ENCODE measurements at regions of chr12 and their contacts with region 1.

Region 1: DNA sequence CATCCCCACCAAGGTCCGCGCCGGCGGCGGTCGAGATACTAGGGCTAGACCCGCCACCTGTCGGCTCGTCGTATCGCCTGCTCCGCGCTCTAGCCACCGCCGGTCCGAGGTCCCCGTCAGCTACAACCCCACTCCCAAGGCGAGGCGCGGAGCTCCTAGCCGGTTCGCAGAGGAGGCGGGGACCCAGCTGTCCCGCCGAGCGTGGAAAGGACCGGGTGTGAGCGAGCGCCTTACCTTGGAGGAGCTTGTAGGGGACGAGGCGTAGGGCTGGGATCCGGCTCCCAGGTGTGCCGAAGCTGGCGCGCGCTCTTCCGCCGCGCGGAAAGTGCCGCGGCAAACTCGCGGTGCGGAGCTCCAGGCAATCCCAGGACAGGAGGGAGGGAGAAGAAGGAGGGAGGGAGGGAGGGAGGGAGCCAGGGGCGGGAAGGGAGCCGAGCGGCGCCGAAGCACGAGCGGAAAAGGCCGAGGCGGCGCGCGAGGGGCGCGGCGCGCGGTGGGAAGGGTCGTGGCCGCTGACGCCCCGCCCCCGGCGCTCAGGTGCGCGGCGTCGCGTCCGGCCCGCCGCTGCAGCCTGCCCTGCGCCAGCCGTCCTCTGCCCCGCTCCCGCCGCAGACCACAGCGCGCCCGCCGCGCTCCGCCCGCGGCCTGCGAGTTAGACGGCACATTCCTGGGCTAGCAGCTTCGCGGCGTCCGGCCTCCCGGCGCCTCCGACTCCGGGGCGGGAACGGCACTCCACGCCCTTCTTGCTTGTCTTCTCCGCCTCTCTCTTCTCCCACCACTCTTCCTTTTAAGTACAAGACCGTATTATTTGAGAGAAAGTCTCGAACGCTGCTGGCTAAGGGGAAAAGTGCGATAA is at the start of gene PAWR:
- DNase-seq: peak; percentile 86
- H3K4me3 Mint-ChIP-seq: peak within 1 kb of the TSS; percentile 87
- H3K27ac Mint-ChIP-seq: peak within 1 kb of the TSS; percentile 96
- H3K4me1 Mint-ChIP-seq: peaks cover 32% of the 10 kb centered on the region
- H3K27me3 Mint-ChIP-seq: no peaks in the 10 kb centered on the region
- CTCF ChIP-seq: peak; percentile 17
- total RNA-seq, gene PAWR: 248 and 330 TPM in 2 replicates

Region 2: DNA sequence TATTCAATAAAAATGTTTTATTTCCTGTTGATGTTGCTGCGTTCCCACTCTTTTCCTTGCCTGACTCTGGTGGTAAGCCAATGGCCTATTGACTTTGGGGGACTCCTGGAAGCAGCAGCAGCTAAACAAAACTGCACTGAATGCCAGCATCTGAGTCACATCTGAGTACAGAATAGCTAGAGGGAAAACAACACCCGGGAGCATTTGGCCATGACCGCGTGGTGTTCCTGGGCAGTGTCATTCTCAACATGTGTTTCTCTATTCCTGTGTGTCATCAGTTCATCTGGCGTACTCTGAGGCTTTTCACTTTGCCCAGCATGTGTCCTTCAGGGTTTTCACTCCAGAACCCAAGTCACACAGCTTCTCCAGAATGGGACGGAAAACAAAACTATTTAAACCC is 238.9 kb before region 1 on chr12:
- CTCF ChIA-PET with region 1: interaction called, 3 read pairs
- POLR2A ChIA-PET with region 1: interaction called, 20 read pairs
- intact Hi-C with region 1: no loop called
- DNase-seq: peak; percentile 94
- H3K4me3 Mint-ChIP-seq: peak overlapping the region; percentile 60
- H3K27ac Mint-ChIP-seq: peak overlapping the region; percentile 94
- H3K4me1 Mint-ChIP-seq: peaks cover 38% of the 10 kb centered on the region
- H3K27me3 Mint-ChIP-seq: no peaks in the 10 kb centered on the region
- CTCF ChIP-seq: no peak

Region 3: GRCh38 chr12:79601909-79602308 is 89.0 kb before region 1 on chr12:
- CTCF ChIA-PET with region 1: interaction called, 3 read pairs
- POLR2A ChIA-PET with region 1: interaction called, 11 read pairs
- intact Hi-C with region 1: no loop called
- DNase-seq: peak; percentile 13
- H3K4me3 Mint-ChIP-seq: no peak overlapping the region
- H3K27ac Mint-ChIP-seq: no peak overlapping the region
- H3K4me1 Mint-ChIP-seq: peaks cover 22% of the 10 kb centered on the region
- H3K27me3 Mint-ChIP-seq: no peaks in the 10 kb centered on the region
- CTCF ChIP-seq: no peak

Region 4: DNA sequence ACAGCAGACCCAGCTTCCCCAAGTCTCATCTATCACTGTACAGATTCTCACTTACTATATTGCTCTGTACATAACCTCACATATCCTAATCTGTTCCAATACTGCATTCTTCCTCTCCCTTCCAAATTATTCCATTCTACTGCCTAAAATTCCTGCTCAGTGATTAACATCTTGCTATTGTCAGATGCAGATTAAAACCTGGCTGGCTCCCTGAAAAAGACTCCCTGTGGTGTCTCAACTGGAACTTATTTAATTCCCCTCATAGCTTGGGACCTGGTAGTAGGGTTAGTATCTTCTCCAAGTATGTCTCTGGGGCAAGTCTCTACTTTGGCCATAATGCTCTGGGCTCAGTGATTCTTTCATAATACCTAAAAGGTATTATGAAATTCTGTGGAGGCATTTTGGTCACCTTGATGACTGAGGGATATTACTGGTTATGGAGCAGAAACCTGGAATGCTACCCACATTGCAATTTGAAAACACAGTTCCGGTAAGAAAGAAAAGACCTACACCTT is 55.9 kb before region 1 on chr12:
- CTCF ChIA-PET with region 1: interaction called, 7 read pairs
- POLR2A ChIA-PET with region 1: interaction called, 67 read pairs
- intact Hi-C with region 1: loop called (anchors 5 kb)
- DNase-seq: peak; percentile 73
- H3K4me3 Mint-ChIP-seq: peak overlapping the region; percentile 52
- H3K27ac Mint-ChIP-seq: peak overlapping the region; percentile 75
- H3K4me1 Mint-ChIP-seq: peaks cover 28% of the 10 kb centered on the region
- H3K27me3 Mint-ChIP-seq: no peaks in the 10 kb centered on the region
- CTCF ChIP-seq: no peak

Region 5: GRCh38 chr12:79725841-79726386 is 35.0 kb after region 1 on chr12:
- CTCF ChIA-PET with region 1: interaction called, 4 read pairs
- POLR2A ChIA-PET with region 1: interaction called, 48 read pairs
- intact Hi-C with region 1: loop called (anchors 2 kb)
- DNase-seq: peak; percentile 75
- H3K4me3 Mint-ChIP-seq: no peak overlapping the region
- H3K27ac Mint-ChIP-seq: peak overlapping the region; percentile 82
- H3K4me1 Mint-ChIP-seq: peaks cover 14% of the 10 kb centered on the region
- H3K27me3 Mint-ChIP-seq: no peaks in the 10 kb centered on the region
- CTCF ChIP-seq: no peak

Region 6: GRCh38 chr12:80186727-80187217 is 495.9 kb after region 1 on chr12:
- CTCF ChIA-PET with region 1: no interaction called
- POLR2A ChIA-PET with region 1: interaction called, 4 read pairs
- intact Hi-C with region 1: loop called (anchors 1 kb)
- DNase-seq: peak; percentile 88
- H3K4me3 Mint-ChIP-seq: no peak overlapping the region
- H3K27ac Mint-ChIP-seq: no peak overlapping the region
- H3K4me1 Mint-ChIP-seq: peaks cover 19% of the 10 kb centered on the region
- H3K27me3 Mint-ChIP-seq: no peaks in the 10 kb centered on the region
- CTCF ChIP-seq: peak; percentile 78